ENCODE measurements at regions of chr9 and their contacts with region 1.

Region 1: GRCh38 chr9:107239474-107239873 is 43.6 kb upstream of the RAD23B start:
- DNase-seq: no peak
- ATAC-seq: no peak
- H3K4me3 ChIP-seq: no peak overlapping the region
- H3K27ac ChIP-seq: no peak overlapping the region
- H3K4me1 ChIP-seq: no peaks in the 10 kb centered on the region
- H3K27me3 ChIP-seq: no peaks in the 10 kb centered on the region

Region 2: DNA sequence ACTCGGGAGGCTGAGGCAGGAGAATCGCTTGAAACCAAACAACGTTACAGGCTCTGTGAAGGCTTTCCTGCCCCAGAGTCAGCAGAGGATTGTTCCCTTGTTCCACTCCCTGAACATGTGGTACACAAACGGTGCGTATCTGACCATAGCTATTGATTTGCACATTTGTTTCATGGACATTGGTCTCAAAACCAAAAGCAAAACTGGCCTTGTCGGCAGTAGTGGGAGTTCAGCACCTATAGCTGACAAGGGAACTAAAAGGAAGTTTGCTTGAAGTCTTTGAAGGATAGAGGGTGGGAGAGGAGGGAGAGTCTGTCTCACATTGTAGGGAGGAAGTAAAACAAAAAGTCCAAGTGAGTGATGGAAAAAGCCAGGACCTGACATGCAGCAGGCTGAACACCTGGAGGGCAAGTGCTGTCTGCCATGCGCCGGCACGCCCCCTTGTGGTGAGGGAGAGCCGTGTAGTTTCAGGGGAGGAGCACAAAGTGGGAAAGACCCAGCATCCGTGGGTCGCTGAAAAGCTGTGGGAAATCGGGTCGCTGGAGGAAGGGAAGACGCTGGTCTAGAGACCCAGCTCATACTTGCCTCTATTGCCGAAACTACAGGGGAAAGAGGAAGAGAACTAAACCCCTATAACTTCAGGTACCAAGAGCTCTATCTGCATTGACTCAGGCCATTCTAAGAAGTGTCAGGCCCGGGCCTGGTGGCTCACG is 101.6 kb after region 1 on chr9:
- intact Hi-C with region 1: loop called in 1 of 4 experiments (anchors 10 kb)
- DNase-seq: peak; percentile 69 to 90 (median 87)
- ATAC-seq: peak; percentile 56 to 58
- H3K4me3 ChIP-seq: no peak overlapping the region
- H3K27ac ChIP-seq: no peak overlapping the region
- H3K4me1 ChIP-seq: no peaks in the 10 kb centered on the region
- H3K27me3 ChIP-seq: no peaks in the 10 kb centered on the region

Region 3: DNA sequence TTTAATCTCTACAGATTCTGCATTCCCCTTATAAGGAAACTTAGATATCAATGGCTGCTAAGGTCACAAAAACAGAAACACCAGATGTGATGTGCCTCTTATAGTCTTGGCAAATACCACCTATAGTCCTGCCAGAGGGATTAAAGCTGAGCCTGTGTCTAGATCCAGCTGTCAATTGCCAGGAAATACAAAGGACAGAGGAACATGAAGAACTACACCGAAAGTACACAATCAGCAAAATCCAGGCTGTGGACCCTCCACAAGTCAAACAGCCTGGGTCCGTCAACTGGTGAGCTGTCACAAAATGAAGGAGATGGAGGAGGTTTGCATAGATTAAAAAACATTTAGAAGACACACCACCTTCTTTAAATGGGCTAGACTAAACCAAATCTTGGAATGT is 164.7 kb after region 1 on chr9:
- intact Hi-C with region 1: no loop called
- DNase-seq: no peak
- ATAC-seq: peak; percentile 57 to 58
- H3K4me3 ChIP-seq: no peak overlapping the region
- H3K27ac ChIP-seq: no peak overlapping the region
- H3K4me1 ChIP-seq: peaks cover 2% of the 10 kb centered on the region
- H3K27me3 ChIP-seq: no peaks in the 10 kb centered on the region

Region 4: DNA sequence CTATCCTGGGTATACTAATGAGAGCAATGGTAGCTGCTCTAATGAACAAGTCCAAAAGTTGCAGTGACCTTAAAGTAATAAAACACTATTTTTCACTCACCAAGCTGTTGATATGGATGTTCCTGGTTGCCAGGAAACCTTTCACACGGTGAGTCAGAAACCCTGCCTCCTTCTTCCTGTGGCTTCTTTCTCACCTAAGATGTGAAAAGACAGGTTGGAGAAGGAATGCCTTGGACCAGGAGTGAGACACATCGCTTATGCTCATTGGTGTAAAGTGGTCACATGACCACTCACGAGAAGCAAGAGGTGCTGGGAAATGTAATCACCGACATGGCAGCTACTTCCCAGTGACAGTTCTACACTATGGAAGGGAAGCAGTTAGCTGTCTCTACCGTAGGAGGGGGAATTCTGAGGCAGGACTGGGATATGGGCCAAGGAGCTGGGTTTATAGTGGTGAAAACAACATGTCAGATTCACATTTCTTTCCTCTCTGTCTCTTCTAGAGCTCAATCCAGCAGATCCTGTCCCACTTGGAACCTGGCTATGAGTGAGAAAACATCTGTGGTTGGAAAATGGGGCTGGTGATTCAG is 570.5 kb after region 1 on chr9:
- intact Hi-C with region 1: no loop called
- DNase-seq: no peak
- ATAC-seq: no peak
- H3K4me3 ChIP-seq: no peak overlapping the region
- H3K27ac ChIP-seq: no peak overlapping the region
- H3K4me1 ChIP-seq: no peaks in the 10 kb centered on the region
- H3K27me3 ChIP-seq: no peaks in the 10 kb centered on the region

Measured in right cardiac atrium (tissue), 5 donors.